CD8-positive, alpha-beta memory T cell (primary cell): ENCODE measurements at regions of chr6 and their contacts with region 1.

Region 1: DNA sequence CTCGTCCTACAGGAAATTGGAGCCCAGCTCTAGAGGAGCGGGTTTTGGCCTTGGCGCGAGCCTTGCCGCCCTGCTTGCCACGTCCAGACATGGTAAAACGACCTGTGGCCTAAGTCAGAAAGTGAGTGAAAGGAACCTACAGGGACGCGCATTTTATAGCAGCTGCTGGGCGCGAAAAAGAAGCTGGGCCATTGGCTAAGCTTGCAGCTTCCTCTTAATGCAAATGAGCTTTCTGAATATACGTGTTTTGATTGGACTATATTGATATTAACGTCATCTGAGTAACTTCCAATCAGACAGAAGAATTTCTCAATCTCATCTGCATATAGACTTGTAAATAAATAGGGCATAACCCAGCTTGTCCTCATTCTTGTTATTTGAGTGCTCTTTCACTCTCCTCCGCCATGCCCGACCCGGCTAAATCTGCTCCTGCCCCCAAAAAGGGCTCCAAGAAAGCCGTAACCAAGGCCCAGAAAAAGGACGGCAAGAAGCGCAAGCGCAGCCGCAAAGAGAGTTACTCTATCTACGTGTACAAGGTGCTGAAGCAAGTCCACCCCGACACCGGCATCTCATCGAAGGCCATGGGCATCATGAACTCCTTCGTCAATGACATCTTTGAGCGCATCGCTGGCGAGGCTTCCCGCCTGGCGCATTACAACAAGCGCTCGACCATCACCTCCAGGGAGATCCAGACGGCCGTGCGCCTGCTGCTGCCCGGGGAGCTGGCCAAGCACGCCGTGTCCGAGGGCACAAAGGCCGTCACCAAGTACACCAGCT is 18.9 kb downstream of the OR2B2 start:
- DNase-seq: peak; percentile 75 to 95 (median 91)
- H3K4me3 ChIP-seq: peak overlapping the region; percentile 82
- H3K4me3 Mint-ChIP-seq: no peak overlapping the region
- H3K27ac ChIP-seq: peak overlapping the region; percentile 79
- H3K27ac Mint-ChIP-seq: peak overlapping the region in 3 of 8 donors; percentile 94 to 97 (median 97)
- H3K4me1 ChIP-seq: peaks cover 19% of the 10 kb centered on the region
- H3K4me1 Mint-ChIP-seq: peaks cover 29 to 44% (median 40%) of the 10 kb centered on the region in 3 donors
- H3K27me3 ChIP-seq: no peaks in the 10 kb centered on the region
- H3K27me3 Mint-ChIP-seq: peaks cover 0 to 2% of the 10 kb centered on the region in 2 donors

Region 2: GRCh38 chr6:26322645-26323482 is 1570.4 kb before region 1 on chr6:
- CTCF ChIA-PET with region 1: no interaction called
- POLR2A ChIA-PET with region 1: interaction called, 10 read pairs
- DNase-seq: peak in 4 of 5 donors; percentile 38 to 79 (median 70)
- H3K4me3 ChIP-seq: peak overlapping the region; percentile 62
- H3K4me3 Mint-ChIP-seq: peak overlapping the region; percentile 72 to 93 (median 87)
- H3K27ac ChIP-seq: peak overlapping the region; percentile 69
- H3K27ac Mint-ChIP-seq: peak overlapping the region; percentile 80 to 94 (median 85)
- H3K4me1 ChIP-seq: no peaks in the 10 kb centered on the region
- H3K4me1 Mint-ChIP-seq: peaks cover 24 to 37% (median 28%) of the 10 kb centered on the region in 3 donors
- H3K27me3 ChIP-seq: no peaks in the 10 kb centered on the region
- H3K27me3 Mint-ChIP-seq: peaks cover 5 to 19% of the 10 kb centered on the region in 2 donors

Region 3: GRCh38 chr6:27177485-27178406 is 715.5 kb before region 1 on chr6:
- CTCF ChIA-PET with region 1: interaction called, 21 read pairs
- POLR2A ChIA-PET with region 1: interaction called, 7 read pairs
- DNase-seq: peak; percentile 56 to 80 (median 71)
- H3K4me3 ChIP-seq: peak overlapping the region; percentile 100
- H3K4me3 Mint-ChIP-seq: peak overlapping the region; percentile 93 to 100 (median 97)
- H3K27ac ChIP-seq: peak overlapping the region; percentile 89
- H3K27ac Mint-ChIP-seq: peak overlapping the region; percentile 75 to 100 (median 92)
- H3K4me1 ChIP-seq: no peaks in the 10 kb centered on the region
- H3K4me1 Mint-ChIP-seq: peaks cover 12 to 26% (median 16%) of the 10 kb centered on the region in 3 donors
- H3K27me3 ChIP-seq: no peaks in the 10 kb centered on the region
- H3K27me3 Mint-ChIP-seq: peaks cover 3 to 18% of the 10 kb centered on the region in 2 donors

Region 4: DNA sequence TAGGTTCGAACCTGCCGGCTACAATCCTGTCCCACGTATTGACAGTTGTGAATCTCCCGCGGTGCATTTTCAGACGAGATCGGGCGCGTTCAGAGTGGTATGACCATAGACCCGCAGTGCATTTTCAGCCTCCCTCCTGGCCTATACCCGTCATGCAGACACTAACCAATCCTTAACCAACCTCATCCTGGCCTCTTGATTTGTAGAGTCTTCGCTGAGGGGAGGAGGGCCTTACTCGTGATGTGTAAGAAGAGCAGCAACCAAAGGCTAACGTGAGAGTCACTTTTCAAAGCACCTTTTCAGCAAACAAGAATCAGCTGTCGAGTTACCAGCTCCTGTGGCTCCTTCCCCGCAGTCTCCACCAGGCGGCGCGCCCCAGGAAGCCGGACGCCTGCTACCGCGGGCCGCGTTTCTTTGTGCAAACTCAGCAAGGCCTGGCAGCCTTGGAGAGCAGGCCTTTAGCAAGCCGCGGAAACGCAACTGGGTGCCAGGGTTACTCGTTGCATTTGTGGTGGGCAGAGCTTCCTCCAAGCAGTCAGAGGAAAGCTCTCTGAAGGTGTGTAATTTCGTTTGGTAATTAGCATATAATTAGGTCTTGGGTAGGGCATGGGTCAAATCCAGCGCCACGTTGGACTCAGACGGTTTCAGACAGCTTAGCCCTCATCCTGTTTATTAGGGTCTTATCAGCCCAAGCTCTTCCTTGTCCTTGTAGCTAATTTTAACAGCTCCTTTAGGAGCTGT is 120.8 kb before region 1 on chr6:
- CTCF ChIA-PET with region 1: interaction called, 122 read pairs
- POLR2A ChIA-PET with region 1: interaction called, 6 read pairs
- DNase-seq: peak; percentile 75 to 87 (median 80)
- H3K4me3 ChIP-seq: no peak overlapping the region
- H3K4me3 Mint-ChIP-seq: peak overlapping the region in 4 of 7 donors; percentile 41 to 68 (median 54)
- H3K27ac ChIP-seq: peak overlapping the region; percentile 57
- H3K27ac Mint-ChIP-seq: peak overlapping the region in 4 of 8 donors; percentile 29 to 78 (median 51)
- H3K4me1 ChIP-seq: peaks cover 5% of the 10 kb centered on the region
- H3K4me1 Mint-ChIP-seq: peaks cover 7 to 10% (median 8%) of the 10 kb centered on the region in 3 donors
- H3K27me3 ChIP-seq: no peaks in the 10 kb centered on the region
- H3K27me3 Mint-ChIP-seq: peaks cover 19 to 32% of the 10 kb centered on the region in 2 donors

Region 5: GRCh38 chr6:27816906-27817305 is 76.3 kb before region 1 on chr6:
- CTCF ChIA-PET with region 1: interaction called, 119 read pairs
- POLR2A ChIA-PET with region 1: interaction called, 164 read pairs
- DNase-seq: no peak
- H3K4me3 ChIP-seq: no peak overlapping the region
- H3K4me3 Mint-ChIP-seq: peak overlapping the region in 1 of 7 donors; percentile 61
- H3K27ac ChIP-seq: no peak overlapping the region
- H3K27ac Mint-ChIP-seq: peak overlapping the region in 1 of 8 donors; percentile 30
- H3K4me1 ChIP-seq: peaks cover 6% of the 10 kb centered on the region
- H3K4me1 Mint-ChIP-seq: peaks cover 17 to 25% (median 18%) of the 10 kb centered on the region in 3 donors
- H3K27me3 ChIP-seq: no peaks in the 10 kb centered on the region
- H3K27me3 Mint-ChIP-seq: no peaks in the 10 kb centered on the region

Region 6: DNA sequence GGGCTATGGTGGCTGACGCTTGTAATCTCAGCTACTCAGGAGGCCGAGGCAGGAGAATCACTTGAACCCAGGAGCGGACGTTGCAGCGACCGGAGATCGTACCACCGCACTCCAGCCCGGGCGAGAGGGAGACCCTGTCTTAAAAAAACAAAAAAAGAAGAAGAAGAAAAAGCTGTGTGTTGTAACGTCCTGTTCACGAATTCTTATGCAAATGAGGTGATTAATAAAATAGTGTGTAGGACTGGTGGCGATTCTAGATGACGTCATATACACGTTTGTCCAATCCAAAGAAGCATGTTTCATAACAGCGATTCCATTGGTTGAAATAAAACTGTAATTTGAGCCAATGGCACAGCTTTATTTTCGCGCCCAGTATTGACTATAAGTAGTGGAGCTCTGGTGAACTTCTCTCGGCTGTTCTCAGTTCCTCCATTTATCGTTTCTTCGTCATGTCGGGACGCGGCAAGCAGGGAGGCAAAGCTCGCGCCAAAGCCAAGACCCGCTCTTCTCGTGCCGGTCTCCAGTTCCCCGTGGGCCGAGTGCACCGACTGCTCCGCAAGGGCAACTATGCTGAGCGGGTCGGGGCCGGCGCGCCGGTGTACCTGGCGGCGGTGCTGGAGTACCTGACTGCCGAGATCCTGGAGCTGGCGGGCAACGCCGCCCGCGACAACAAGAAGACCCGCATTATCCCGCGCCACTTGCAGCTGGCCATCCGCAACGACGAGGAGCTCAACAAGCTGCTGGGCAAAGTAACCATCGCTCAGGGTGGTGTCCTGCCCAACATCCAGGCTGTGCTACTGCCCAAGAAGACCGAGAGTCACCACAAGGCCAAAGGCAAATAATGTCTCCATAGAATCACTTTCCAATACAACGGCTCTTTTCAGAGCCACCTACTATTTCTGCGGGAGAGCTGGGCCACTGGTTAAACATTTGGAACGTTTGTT is 28.1 kb before region 1 on chr6:
- CTCF ChIA-PET with region 1: interaction called, 229 read pairs
- POLR2A ChIA-PET with region 1: interaction called, 623 read pairs
- DNase-seq: peak; percentile 42 to 89 (median 81)
- H3K4me3 ChIP-seq: peak overlapping the region; percentile 63
- H3K4me3 Mint-ChIP-seq: peak overlapping the region; percentile 93 to 99 (median 96)
- H3K27ac ChIP-seq: peak overlapping the region; percentile 83
- H3K27ac Mint-ChIP-seq: peak overlapping the region; percentile 87 to 99 (median 97)
- H3K4me1 ChIP-seq: peaks cover 25% of the 10 kb centered on the region
- H3K4me1 Mint-ChIP-seq: peaks cover 36 to 50% (median 45%) of the 10 kb centered on the region in 3 donors
- H3K27me3 ChIP-seq: no peaks in the 10 kb centered on the region
- H3K27me3 Mint-ChIP-seq: no peaks in the 10 kb centered on the region

Region 7: GRCh38 chr6:28001351-28002135 is 108.3 kb after region 1 on chr6:
- CTCF ChIA-PET with region 1: no interaction called
- POLR2A ChIA-PET with region 1: no interaction called
- DNase-seq: no peak
- H3K4me3 ChIP-seq: no peak overlapping the region
- H3K4me3 Mint-ChIP-seq: no peak overlapping the region
- H3K27ac ChIP-seq: no peak overlapping the region
- H3K27ac Mint-ChIP-seq: peak overlapping the region in 1 of 8 donors; percentile 58
- H3K4me1 ChIP-seq: no peaks in the 10 kb centered on the region
- H3K4me1 Mint-ChIP-seq: no peaks in the 10 kb centered on the region
- H3K27me3 ChIP-seq: no peaks in the 10 kb centered on the region
- H3K27me3 Mint-ChIP-seq: peaks cover 20 to 66% of the 10 kb centered on the region in 2 donors